A673 (cell line): ENCODE measurements at regions of chr16 and their contacts with region 1.

Region 1: DNA sequence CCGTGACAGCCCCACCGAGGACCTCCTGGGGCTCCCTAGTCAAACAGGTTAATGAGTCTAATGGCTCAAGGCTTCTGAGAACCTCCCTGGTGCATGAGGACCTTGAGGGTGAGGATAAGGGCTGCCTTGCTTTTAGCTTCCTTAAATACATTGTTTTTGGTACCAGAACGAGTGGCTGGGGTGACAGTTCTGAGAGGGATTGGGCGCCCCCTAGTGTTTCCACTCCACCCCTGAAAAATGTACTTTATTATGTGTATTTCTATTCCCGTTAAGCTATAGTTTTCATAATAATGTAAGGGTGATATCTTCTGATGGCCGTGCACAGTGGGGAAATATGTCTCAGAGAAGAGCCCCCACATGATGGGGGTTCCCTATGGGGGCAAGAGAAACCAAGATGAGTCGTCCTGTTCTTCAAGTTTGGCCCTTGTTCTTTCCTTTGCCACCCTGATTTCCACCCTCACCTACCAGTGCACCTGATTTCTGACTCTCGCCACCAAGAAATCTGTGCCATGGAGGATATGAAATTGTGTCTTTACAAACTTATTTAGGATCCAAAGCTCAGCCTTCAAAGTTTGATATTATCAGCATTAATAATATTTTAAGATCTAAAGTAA is 14.5 kb upstream of the VWA3A start:
- DNase-seq: peak; percentile 74
- H3K4me3 ChIP-seq: no peak overlapping the region
- H3K27ac ChIP-seq: no peak overlapping the region
- H3K4me1 ChIP-seq: no peaks in the 10 kb centered on the region
- H3K27me3 ChIP-seq: no peaks in the 10 kb centered on the region
- CTCF ChIP-seq: peak; percentile 93

Region 2: GRCh38 chr16:21952793-21953540 is 124.8 kb before region 1 on chr16 and contains the start of gene UQCRC2:
- CTCF ChIA-PET with region 1: interaction called, 17 read pairs
- POLR2A ChIA-PET with region 1: no interaction called
- intact Hi-C with region 1: loop called (anchors 5 kb)
- DNase-seq: peak; percentile 95
- H3K4me3 ChIP-seq: peak within 1 kb of the TSS; percentile 74
- H3K27ac ChIP-seq: peak within 1 kb of the TSS; percentile 98
- H3K4me1 ChIP-seq: peaks cover 12% of the 10 kb centered on the region
- H3K27me3 ChIP-seq: no peaks in the 10 kb centered on the region
- CTCF ChIP-seq: no peak
- total RNA-seq, gene UQCRC2: 259 and 311 TPM in 2 replicates

Region 3: GRCh38 chr16:22001591-22001990 is 76.2 kb before region 1 on chr16:
- CTCF ChIA-PET with region 1: interaction called, 89 read pairs
- POLR2A ChIA-PET with region 1: no interaction called
- intact Hi-C with region 1: loop called (anchors 1 kb)
- DNase-seq: peak; percentile 34
- H3K4me3 ChIP-seq: no peak overlapping the region
- H3K27ac ChIP-seq: no peak overlapping the region
- H3K4me1 ChIP-seq: no peaks in the 10 kb centered on the region
- H3K27me3 ChIP-seq: no peaks in the 10 kb centered on the region
- CTCF ChIP-seq: no peak

Region 4: DNA sequence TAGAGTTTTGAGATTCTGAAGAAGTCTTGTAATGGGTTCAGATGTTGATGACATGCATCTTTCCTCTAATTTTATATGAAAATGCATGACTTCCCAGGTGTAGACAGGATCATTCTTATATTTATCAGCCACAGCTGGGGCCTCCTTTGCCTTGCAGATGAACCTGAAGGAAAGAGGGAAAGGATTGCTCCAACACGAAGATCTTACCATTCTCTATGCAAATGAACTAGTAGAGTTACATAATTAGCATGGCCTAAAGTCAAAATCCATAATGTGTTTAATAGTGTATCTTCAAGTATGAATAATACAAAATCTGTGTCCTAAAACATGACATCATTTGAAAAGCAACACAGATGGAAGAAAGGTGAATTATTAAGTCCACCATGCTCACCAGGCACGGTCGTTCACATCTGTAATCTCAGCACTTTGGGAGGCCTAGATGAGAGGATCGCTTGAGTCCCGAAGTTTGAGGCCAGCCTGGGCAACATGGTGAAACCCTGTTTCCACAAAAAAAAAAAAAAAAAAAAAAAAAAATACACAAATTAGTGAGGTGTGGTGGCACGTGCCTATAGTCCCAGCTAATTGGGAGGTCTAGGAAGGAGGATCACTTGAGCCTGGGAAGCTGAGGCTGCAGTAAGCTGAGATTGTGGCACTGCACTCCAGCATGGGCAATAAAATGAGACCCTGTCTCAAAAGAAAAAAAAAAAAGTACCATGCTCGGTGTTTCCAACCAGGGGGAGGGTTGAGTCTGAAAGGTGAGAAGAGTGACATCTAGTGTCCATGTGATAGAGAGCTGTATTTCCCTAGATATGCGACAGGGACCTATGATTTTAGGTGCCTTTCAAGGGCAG is 20.8 kb after region 1 on chr16:
- CTCF ChIA-PET with region 1: interaction called, 26 read pairs
- POLR2A ChIA-PET with region 1: no interaction called
- intact Hi-C with region 1: no loop called
- DNase-seq: peak; percentile 82
- H3K4me3 ChIP-seq: no peak overlapping the region
- H3K27ac ChIP-seq: no peak overlapping the region
- H3K4me1 ChIP-seq: no peaks in the 10 kb centered on the region
- H3K27me3 ChIP-seq: no peaks in the 10 kb centered on the region
- CTCF ChIP-seq: peak; percentile 78

Region 5: GRCh38 chr16:23119570-23119969 is 1041.8 kb after region 1 on chr16:
- CTCF ChIA-PET with region 1: no interaction called
- POLR2A ChIA-PET with region 1: no interaction called
- intact Hi-C with region 1: no loop called
- DNase-seq: no peak
- H3K4me3 ChIP-seq: no peak overlapping the region
- H3K27ac ChIP-seq: no peak overlapping the region
- H3K4me1 ChIP-seq: peaks cover 48% of the 10 kb centered on the region
- H3K27me3 ChIP-seq: no peaks in the 10 kb centered on the region
- CTCF ChIP-seq: no peak